Kidney (tissue), 22 donors: ENCODE measurements at regions of chr12 and their contacts with region 1.

Region 1: DNA sequence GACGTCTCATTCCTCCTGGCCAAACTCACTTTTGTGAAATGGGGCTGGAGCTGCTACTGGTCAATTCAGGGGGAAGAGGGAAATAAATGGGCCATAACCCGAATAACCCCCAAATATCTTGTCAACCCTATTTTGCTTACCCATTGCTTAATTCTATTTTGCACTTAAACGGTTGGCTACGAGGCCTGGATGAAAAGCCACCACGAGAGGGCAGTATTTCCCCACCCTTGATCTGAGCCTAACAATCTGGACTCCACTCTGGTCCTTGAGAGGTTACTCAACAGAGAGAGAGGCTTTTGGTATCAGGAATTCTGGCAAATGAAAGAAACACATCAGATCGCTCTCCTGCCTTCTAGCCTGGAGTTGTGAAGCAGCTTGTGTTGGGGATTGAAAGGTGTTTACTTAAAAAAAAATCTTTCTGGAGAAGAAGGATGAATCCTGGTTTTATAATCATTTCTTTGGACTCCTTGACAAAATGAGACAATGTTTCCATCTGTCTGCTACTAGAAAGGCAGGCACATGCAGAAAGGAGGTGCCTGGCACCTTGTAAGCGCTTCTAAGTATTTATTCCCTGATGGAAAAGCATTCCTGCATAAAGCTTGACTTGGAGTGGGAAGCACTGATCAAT is 22.4 kb upstream of the FBXO21 start:
- DNase-seq: peak in 4 of 5 donors; percentile 67 to 89 (median 80)
- H3K4me3 ChIP-seq: no peak overlapping the region
- H3K27ac ChIP-seq: no peak overlapping the region
- H3K4me1 ChIP-seq: no peaks in the 10 kb centered on the region
- H3K27me3 ChIP-seq: no peaks in the 10 kb centered on the region
- CTCF ChIP-seq: peak; percentile 83

Region 2: DNA sequence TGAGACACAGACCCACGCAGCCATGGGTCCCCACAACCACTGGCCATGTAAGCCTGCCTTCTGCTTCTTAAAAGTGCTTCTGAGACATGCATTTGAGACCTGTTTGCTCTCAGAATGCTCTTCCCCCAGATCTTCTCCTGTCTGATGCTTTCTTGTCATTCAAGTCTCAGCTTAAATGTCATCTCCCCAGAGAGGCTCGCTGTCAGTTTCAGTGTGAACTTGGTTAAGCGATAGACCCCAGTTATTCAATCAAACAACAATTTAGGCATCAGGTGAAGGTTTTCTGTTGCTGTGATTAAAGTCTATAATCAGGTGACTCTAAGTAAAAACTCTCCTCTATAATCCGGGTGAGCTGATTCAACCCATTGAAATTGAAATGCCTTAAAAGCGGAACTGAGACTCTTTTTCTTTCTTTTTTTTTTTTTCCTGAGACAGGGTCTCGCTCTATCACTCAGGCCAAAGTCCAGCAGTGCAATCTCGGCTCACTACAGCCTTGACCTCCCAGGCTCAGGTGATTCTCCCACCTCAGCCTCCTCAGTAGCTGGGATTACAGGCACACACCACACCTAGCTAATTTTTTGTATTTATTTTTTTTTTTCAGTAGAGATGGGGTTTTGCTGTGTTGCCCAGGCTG is 632.7 kb after region 1 on chr12:
- intact Hi-C with region 1: loop called (anchors 10 kb)
- DNase-seq: no peak
- H3K4me3 ChIP-seq: no peak overlapping the region
- H3K27ac ChIP-seq: no peak overlapping the region
- H3K4me1 ChIP-seq: no peaks in the 10 kb centered on the region
- H3K27me3 ChIP-seq: no peaks in the 10 kb centered on the region
- CTCF ChIP-seq: no peak